ENCODE measurements at regions of chr20 and their contacts with region 1.

Region 1: DNA sequence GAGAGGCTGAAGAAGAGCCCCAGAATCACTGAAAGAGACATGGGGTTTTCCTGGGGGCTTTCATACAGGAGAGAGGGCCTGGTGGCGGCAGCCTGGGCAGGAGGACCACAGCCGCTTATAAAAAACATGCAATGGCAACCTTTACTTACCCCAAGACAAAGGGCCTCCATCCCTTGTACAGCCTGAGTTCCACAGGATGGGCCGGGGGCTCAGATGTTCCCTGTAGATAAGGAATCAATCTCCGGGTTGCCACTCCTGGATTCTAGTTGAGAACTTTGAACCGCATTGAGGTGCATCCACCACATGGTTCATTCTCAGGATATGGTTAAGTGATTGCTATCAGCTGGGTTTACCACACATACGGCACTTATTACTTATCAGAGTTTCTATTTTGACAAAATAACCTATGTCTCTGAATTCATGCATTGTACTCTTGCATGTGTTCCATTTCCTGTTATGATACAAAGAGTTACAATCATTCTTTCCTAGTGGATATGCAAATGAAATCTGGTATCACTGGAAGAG is 677.6 kb downstream of the KIF16B start:
- DNase-seq: no peak
- H3K4me3 ChIP-seq: no peak overlapping the region
- H3K27ac ChIP-seq: no peak overlapping the region
- H3K4me1 ChIP-seq: no peaks in the 10 kb centered on the region
- H3K27me3 ChIP-seq: no peaks in the 10 kb centered on the region
- CTCF ChIP-seq: no peak
- POLR2A ChIP-seq: no peak

Region 2: GRCh38 chr20:15673206-15673605 is 222.4 kb before region 1 on chr20:
- intact Hi-C with region 1: loop called (anchors 10 kb)
- DNase-seq: no peak
- H3K4me3 ChIP-seq: no peak overlapping the region
- H3K27ac ChIP-seq: no peak overlapping the region
- H3K4me1 ChIP-seq: no peaks in the 10 kb centered on the region
- H3K27me3 ChIP-seq: no peaks in the 10 kb centered on the region
- CTCF ChIP-seq: no peak
- POLR2A ChIP-seq: no peak

Measured in prostate gland (tissue), 2 donors.